Ascending aorta (tissue), 2 donors: ENCODE measurements at regions of chr5 and their contacts with region 1.

Region 1: DNA sequence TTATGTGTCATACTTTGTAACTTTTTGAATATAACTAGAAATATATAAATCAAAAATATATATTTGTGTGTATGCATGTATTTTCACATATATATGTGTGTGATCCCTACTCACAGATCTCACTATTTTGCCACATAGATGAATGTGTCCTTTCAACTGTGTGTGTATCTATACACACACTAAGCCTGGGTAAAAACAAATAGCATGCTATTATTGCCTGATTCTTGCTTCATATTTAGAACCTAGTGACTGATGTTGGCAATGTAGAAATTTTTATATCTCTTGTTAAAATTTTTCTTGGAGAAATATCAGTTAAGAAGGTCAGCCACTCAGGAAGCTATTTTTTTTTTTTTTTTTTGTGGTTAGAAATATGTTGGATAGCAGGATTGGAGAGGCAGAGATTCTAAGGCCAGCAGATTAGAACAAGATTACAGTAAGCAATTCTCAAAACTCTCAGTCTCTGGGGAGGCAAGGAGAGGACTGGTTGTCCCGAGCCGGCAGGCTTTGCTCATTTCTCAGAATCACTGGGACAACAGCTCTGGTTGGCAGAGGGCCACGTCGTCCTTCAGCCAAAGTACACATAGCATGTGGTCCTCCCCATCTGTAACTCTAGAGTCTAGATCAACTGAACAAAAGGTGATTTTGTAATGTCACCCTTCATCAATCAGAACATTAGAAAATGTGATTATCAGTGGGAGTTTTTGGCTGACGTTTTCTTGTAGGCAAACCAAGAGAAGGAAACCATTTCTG is 19.7 kb downstream of the C6 start:
- DNase-seq: peak; percentile 87 to 98
- H3K4me3 ChIP-seq: no peak overlapping the region
- H3K27ac ChIP-seq: peak overlapping the region; percentile 52 to 61
- H3K4me1 ChIP-seq: peaks cover 0 to 8% of the 10 kb centered on the region in 2 donors
- H3K27me3 ChIP-seq: no peaks in the 10 kb centered on the region
- CTCF ChIP-seq: no peak

Region 2: DNA sequence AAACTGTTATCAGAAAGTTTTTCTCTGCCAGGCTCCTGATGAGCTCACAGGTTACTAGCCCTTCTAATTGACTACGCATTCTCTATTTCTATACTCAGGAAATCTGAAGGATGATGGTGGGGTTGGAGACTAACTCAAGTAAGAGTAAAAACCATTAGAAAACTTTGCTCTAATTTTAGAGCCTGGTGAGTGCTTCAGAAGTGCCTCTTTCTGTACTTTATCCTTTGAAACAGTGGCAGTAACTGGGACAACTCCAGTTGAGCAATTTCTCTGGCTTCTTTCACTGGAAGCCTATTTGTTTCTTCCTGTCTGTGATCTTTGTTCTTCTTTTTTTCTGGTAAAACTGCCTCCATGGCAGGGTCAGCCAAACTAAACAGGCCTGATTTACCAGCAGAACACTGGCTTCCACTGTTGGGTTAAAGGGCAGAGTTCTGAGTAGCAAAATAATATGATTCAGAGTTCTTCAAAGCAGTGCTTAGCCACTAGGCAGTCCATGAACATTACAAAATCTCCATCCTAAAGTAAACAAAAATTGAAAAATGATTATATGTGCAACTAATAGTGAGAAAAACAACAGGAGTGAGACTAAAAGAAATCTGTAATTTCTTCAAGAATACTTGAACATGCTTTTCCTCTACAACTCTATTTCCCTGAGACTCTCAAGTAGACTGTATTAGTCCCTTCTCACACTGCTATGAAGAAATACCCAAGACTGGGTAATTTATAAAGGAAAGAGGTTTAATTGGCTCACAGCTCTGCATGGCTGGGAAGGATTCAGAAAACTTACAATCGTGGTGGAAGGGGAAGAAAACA is 202.3 kb before region 1 on chr5:
- intact Hi-C with region 1: loop called (anchors 2 kb)
- DNase-seq: peak in 1 of 2 donors; percentile 88
- H3K4me3 ChIP-seq: no peak overlapping the region
- H3K27ac ChIP-seq: peak overlapping the region; percentile 66 to 80
- H3K4me1 ChIP-seq: peaks cover 0 to 19% of the 10 kb centered on the region in 2 donors
- H3K27me3 ChIP-seq: no peaks in the 10 kb centered on the region
- CTCF ChIP-seq: no peak

Region 3: DNA sequence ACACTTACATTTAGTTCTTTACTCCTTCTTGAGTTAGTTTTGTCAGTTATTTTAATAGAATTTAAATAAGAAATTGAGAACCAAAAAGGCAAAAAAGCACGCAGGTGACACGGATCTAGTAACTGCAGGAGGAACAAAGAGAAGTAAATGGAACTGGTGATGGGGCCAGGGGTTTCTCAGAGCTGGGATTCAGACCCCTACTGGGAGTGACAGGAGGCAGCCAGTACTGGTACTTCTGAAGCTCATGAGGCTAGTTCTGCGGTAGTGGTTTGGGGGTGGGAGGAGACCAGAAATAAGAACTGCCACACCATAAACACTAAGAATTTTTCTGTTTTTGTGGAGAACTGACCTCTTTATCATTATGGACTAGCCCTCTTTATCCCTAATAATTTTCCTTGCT is 628.4 kb after region 1 on chr5:
- intact Hi-C with region 1: loop called (anchors 10 kb)
- DNase-seq: no peak
- H3K4me3 ChIP-seq: no peak overlapping the region
- H3K27ac ChIP-seq: no peak overlapping the region
- H3K4me1 ChIP-seq: peaks cover 0 to 12% of the 10 kb centered on the region in 2 donors
- H3K27me3 ChIP-seq: no peaks in the 10 kb centered on the region
- CTCF ChIP-seq: no peak